CD8-positive, alpha-beta memory T cell (primary cell): ENCODE measurements at regions of chr11 and their contacts with region 1.

Region 1: DNA sequence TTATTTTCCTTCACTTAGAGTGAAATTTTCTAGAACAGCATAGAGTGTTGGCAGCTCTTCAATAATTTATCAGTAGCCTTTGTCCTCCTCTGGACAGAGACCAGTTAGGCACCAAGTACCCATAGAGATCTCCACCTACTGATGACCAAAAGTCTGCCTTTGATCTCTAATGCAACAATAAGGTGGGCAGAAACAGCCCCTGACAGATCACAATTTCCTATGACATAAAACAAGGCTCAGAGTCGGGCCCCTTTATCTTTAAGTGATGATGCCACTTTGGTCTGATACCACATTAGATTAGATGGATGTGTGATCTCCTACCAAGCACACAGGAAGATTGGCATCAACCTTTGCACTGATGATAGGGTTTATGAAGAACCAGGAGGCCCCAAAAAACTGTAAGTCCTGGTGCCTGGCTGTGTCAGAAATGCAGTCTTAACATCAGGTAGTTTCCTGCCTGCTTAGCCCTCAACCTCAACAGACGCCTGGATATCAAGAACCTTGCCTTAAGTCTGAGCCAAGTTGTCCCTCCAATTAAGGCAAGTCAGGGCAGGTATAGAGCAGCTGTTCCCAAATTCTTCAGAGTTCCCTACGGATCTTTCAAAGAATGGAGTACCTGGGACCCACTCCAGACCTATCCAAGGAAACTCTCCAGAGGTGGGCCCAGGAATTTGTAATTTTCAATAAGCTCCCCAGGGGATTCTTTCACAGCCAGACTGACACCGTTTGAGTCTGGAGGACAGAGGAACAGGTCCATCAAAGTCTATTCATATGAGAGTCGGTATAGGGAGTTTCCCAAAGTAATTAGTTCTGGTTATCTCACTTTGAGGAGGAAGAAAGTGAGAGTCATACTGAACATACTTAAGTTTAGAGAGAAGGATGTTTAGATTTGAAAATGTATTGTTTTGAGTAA is 30.6 kb upstream of the TMPRSS4 start:
- DNase-seq: peak; percentile 19 to 80 (median 73)
- H3K4me3 ChIP-seq: no peak overlapping the region
- H3K4me3 Mint-ChIP-seq: peak overlapping the region; percentile 1 to 78 (median 66)
- H3K27ac ChIP-seq: peak overlapping the region; percentile 9
- H3K27ac Mint-ChIP-seq: peak overlapping the region; percentile 89 to 99 (median 97)
- H3K4me1 ChIP-seq: peaks cover 95% of the 10 kb centered on the region
- H3K4me1 Mint-ChIP-seq: peaks cover 84 to 97% (median 96%) of the 10 kb centered on the region in 3 donors
- H3K27me3 ChIP-seq: no peaks in the 10 kb centered on the region
- H3K27me3 Mint-ChIP-seq: no peaks in the 10 kb centered on the region

Region 2: DNA sequence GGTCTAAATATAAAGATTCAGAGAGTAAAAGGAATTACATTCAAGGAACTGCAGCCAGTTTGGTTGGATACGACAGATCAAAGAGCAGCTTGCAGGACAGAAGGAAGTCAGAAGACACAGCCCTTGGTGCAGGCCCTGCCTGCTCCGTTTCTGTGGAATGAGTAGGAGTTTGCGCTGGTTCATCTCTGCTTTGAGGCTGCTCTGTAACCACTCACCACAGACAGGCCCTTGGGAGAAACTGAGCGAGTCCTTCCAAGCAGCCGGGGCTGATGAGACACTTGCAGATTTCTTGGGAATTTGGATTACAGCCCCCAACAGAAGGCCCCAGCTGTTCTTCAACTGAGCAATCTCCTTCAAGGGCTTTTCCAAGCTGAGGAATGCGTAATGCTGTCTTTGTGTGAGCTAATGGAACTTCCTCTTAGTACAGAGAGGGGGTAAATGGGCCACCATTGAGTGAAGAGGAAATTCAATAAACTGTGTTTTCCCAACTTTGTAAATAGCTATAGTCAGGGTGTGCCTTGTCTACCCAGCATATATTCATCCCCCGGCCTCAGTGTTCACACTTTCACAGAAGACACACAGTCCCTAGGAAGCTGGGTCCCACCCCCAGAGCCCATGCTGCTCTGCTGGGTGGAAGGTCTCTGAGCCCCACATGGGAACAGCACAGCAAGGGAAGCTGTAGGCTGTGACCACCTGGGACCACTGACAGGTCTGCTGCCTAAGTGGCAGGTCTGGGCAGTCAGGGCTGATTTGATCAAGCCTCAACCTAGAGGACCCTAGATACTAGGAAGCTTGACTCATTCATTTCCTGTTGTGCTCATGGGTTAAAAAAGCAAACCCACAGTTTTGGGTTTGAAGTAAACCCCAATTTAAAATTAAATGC is 43.5 kb before region 1 on chr11:
- CTCF ChIA-PET with region 1: interaction called, 141 read pairs
- POLR2A ChIA-PET with region 1: interaction called, 158 read pairs
- DNase-seq: peak in 2 of 5 donors; percentile 37 to 62
- H3K4me3 ChIP-seq: peak overlapping the region; percentile 13
- H3K4me3 Mint-ChIP-seq: peak overlapping the region; percentile 48 to 85 (median 60)
- H3K27ac ChIP-seq: peak overlapping the region; percentile 72
- H3K27ac Mint-ChIP-seq: peak overlapping the region; percentile 88 to 100 (median 94)
- H3K4me1 ChIP-seq: peaks cover 93% of the 10 kb centered on the region
- H3K4me1 Mint-ChIP-seq: peaks cover 94 to 100% (median 98%) of the 10 kb centered on the region in 3 donors
- H3K27me3 ChIP-seq: no peaks in the 10 kb centered on the region
- H3K27me3 Mint-ChIP-seq: no peaks in the 10 kb centered on the region

Region 3: GRCh38 chr11:118060869-118061268 is 14.6 kb after region 1 on chr11:
- CTCF ChIA-PET with region 1: no interaction called
- POLR2A ChIA-PET with region 1: no interaction called
- DNase-seq: no peak
- H3K4me3 ChIP-seq: no peak overlapping the region
- H3K4me3 Mint-ChIP-seq: no peak overlapping the region
- H3K27ac ChIP-seq: no peak overlapping the region
- H3K27ac Mint-ChIP-seq: no peak overlapping the region
- H3K4me1 ChIP-seq: no peaks in the 10 kb centered on the region
- H3K4me1 Mint-ChIP-seq: peaks cover 10 to 17% (median 15%) of the 10 kb centered on the region in 3 donors
- H3K27me3 ChIP-seq: no peaks in the 10 kb centered on the region
- H3K27me3 Mint-ChIP-seq: peaks cover 3 to 5% of the 10 kb centered on the region in 2 donors

Region 4: DNA sequence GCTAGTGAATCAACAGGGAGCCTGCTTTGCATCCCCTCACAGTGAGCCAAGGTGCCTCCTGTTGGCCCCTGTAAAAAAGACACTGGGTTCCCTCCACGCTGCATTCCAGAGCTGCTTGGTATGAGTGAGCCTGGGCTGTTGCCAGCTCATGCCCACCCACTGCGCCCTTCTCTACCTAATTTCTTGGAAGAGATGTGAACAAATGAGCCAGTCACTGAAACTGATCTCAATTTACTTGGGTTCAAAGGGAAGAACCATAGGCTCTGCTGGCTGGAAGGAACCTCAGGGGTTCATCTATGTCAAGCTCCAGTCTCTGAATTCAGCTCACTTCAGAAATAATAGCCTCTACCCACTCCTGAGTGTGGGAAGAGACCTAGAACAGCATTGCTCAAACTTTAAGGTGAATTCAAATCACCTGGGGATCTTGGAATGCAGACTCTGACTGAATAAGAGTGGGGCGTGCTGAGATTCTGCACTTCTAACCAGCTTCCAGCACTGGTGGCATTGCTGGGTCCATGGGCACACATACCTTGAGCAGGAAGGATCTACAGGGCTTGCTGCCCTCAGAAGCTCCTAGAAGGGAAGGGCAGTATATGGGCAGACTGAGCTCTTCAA is 25.2 kb after region 1 on chr11:
- CTCF ChIA-PET with region 1: no interaction called
- POLR2A ChIA-PET with region 1: no interaction called
- DNase-seq: no peak
- H3K4me3 ChIP-seq: no peak overlapping the region
- H3K4me3 Mint-ChIP-seq: no peak overlapping the region
- H3K27ac ChIP-seq: no peak overlapping the region
- H3K27ac Mint-ChIP-seq: no peak overlapping the region
- H3K4me1 ChIP-seq: no peaks in the 10 kb centered on the region
- H3K4me1 Mint-ChIP-seq: peaks cover under 1 to 4% (median 2%) of the 10 kb centered on the region in 3 donors
- H3K27me3 ChIP-seq: no peaks in the 10 kb centered on the region
- H3K27me3 Mint-ChIP-seq: peaks cover 9 to 43% of the 10 kb centered on the region in 2 donors